Cardiac septum (tissue), 1 donor: ENCODE measurements at regions of chr14 and their contacts with region 1.

Region 1: GRCh38 chr14:105375635-105376057 is 22.7 kb upstream of the TEX22 start:
- DNase-seq: no peak

Region 2: GRCh38 chr14:105275267-105275946 is 100.2 kb before region 1 on chr14:
- intact Hi-C with region 1: no loop called
- DNase-seq: no peak

Region 3: GRCh38 chr14:105527661-105528581 is 152.3 kb after region 1 on chr14:
- intact Hi-C with region 1: loop called (anchors 1 kb)
- DNase-seq: peak; percentile 90